Activated CD8-positive, alpha-beta T cell treated with anti-CD3 and anti-CD28 coated beads for 36 hours (primary cell): ENCODE measurements at regions of chr17 and their contacts with region 1.

Region 1: DNA sequence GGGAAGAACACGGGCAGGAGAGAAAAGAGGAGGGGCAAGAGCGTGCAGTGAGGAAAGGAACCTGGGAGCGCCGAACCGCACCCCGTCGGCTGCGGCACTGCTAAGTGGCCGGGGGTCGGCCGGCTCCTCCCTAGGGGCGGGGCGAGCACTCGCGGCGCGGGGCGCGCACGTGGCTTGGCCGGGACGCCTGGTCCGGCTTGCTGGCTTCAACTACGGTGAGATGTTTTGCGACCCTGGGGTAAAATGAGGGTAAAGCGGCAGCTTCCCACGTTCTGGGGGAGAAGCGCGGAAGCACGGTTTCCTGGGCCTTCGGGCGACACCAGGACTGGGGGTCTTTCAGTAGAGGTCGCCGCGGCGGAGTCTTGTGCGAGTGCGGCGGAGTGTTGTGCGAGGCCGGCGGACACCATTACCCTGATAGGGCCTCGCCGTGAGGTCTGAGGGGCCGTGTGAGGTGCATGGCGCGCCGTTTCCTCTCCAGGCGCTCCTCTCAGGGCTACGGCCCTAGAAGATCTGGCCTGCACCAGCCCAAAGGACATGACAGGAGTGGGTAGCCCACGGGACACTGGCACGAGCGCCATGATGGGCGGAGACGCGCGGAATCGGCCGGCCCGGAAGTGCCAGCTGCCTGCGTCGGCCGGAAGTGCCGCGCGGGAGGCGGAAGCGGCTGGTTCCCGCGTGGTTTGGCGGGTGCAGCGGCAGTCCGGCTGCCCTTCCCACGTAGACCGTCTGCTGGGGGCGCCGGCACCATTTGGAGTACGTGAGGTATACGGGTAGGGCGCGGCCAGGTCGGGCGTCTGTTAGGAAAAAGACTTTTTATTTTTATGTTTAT is at the starts of genes MYO19 and PIGW:
- DNase-seq: peak; percentile 86
- ATAC-seq: peak; percentile 83
- H3K4me3 Mint-ChIP-seq: peak within 1 kb of the TSS; percentile 85
- H3K27ac Mint-ChIP-seq: peak within 1 kb of the TSS; percentile 99
- H3K4me1 Mint-ChIP-seq: peaks cover 32% of the 10 kb centered on the region
- H3K27me3 Mint-ChIP-seq: no peaks in the 10 kb centered on the region
- CTCF ChIP-seq: no peak
- total RNA-seq, gene MYO19: 106 to 114 TPM
- total RNA-seq, gene PIGW: 11.0 to 11.9 TPM

Region 2: DNA sequence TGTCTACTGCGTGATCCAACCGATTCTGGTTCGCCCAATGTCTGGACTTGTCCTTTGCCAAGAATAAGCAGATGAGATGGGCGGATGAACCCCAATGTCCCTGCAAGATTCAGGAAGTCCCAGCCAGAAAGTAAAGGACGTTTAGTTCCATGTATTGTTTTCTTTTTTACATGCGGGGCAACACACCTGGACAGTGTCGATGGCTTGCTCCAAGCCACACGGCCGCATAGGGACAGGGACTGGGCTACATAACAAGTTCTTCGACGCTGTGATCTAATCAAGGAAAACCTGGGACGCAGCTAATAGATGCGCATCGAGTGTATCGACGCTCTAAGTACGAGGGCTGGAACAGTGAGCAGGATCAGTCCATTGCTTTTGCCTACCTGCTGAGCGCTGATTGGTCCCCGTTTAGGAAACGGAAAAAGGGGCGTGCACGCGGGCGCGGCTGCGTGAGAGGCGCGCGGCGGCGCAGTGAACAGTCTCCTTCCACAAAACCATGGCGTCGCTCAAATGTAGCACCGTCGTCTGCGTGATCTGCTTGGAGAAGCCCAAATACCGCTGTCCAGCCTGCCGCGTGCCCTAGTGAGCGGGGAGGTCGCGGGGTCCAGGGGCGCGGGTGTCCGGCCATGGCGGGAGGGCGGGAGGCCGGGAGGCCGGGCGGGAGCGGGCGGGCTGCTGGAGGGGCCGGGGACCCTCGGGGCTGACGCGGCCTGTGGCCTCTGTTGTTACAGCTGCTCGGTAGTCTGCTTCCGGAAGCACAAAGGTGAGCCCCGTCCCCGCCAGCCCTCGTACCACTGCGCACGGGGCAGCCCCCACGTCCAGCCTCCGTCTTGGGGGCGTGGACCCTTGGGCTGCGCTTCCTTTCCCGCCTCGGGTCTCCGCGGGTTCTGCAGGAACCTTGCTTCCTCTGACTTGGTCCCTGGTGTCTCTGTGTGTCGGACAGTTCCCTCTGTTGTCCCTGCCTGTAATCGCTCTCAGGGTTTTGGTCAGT is 48.6 kb before region 1 on chr17 and contains the start of gene ZNHIT3:
- CTCF ChIA-PET with region 1: interaction called, 5 read pairs
- POLR2A ChIA-PET with region 1: interaction called, 14 read pairs
- intact Hi-C with region 1: no loop called
- DNase-seq: peak; percentile 96
- ATAC-seq: peak; percentile 91
- H3K4me3 Mint-ChIP-seq: peak within 1 kb of the TSS; percentile 99
- H3K27ac Mint-ChIP-seq: peak within 1 kb of the TSS; percentile 100
- H3K4me1 Mint-ChIP-seq: peaks cover 45% of the 10 kb centered on the region
- H3K27me3 Mint-ChIP-seq: peaks cover 9% of the 10 kb centered on the region
- CTCF ChIP-seq: no peak
- total RNA-seq, gene ZNHIT3: 46.5 to 50.5 TPM

Region 3: GRCh38 chr17:36524428-36524876 is 10.6 kb before region 1 on chr17:
- CTCF ChIA-PET with region 1: interaction called, 10 read pairs
- POLR2A ChIA-PET with region 1: interaction called, 36 read pairs
- intact Hi-C with region 1: no loop called
- DNase-seq: peak; percentile 10
- ATAC-seq: peak; percentile 77
- H3K4me3 Mint-ChIP-seq: no peak overlapping the region
- H3K27ac Mint-ChIP-seq: peak overlapping the region; percentile 60
- H3K4me1 Mint-ChIP-seq: peaks cover 25% of the 10 kb centered on the region
- H3K27me3 Mint-ChIP-seq: no peaks in the 10 kb centered on the region
- CTCF ChIP-seq: no peak

Region 4: DNA sequence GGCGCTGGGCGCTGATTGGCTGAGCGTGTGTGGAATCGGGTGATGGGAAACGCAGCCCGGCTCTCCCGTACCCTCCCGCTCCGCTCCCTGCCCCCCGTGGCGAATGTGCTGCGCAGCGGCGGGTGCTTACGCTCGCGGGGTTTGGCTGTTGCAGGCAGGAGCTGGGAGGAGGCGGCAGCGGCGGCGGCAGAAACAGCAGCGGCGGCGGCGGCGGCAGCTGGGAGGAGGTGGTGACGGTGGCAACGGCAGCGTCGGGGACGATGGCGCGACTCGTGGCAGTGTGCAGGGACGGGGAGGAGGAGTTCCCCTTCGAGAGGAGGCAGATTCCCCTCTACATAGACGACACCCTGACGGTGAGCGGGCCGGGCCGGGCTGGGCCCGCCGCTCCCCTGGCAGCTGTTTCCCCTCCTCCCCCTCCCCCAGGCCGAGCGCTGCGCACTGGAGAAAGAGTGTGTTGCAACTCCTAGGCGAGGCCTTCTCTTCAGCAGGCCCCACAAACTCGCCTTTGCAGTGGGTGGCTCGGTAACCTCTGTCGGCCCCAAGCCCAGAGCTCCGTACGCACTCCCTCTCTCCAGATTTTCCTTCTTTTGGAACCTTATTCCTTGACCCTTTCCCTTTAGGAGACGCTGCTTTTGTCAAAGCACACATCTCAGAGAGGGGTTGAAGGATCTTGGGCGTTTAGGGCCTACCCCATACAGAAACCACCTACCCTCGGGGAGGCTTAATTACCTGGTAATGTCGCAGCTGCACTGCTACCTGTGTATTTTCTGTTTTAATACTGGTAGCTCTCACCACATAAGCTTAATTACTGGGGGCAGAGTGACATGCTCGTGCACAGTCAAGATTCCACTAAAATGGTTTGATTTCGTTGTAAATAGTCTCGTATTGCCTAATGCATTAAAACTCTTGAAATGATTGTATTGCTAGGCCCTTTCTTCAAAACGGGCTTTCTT is 10.7 kb after region 1 on chr17:
- CTCF ChIA-PET with region 1: interaction called, 22 read pairs
- POLR2A ChIA-PET with region 1: interaction called, 91 read pairs
- intact Hi-C with region 1: no loop called
- DNase-seq: peak; percentile 97
- ATAC-seq: peak; percentile 78
- H3K4me3 Mint-ChIP-seq: peak overlapping the region; percentile 98
- H3K27ac Mint-ChIP-seq: peak overlapping the region; percentile 96
- H3K4me1 Mint-ChIP-seq: peaks cover 33% of the 10 kb centered on the region
- H3K27me3 Mint-ChIP-seq: no peaks in the 10 kb centered on the region
- CTCF ChIP-seq: no peak

Region 5: GRCh38 chr17:36792849-36793248 is 257.8 kb after region 1 on chr17:
- CTCF ChIA-PET with region 1: no interaction called
- POLR2A ChIA-PET with region 1: no interaction called
- intact Hi-C with region 1: no loop called
- DNase-seq: no peak
- ATAC-seq: no peak
- H3K4me3 Mint-ChIP-seq: no peak overlapping the region
- H3K27ac Mint-ChIP-seq: no peak overlapping the region
- H3K4me1 Mint-ChIP-seq: no peaks in the 10 kb centered on the region
- H3K27me3 Mint-ChIP-seq: peaks cover 13% of the 10 kb centered on the region
- CTCF ChIP-seq: no peak